GM10248 (cell line): ENCODE measurements at regions of chr4 and their contacts with region 1.

Region 1: GRCh38 chr4:2963175-2963965 is at the starts of genes GRK4 and NOP14:
- DNase-seq: peak; percentile 98
- CTCF ChIP-seq: peak; percentile 12

Region 2: GRCh38 chr4:2948895-2949765 is 14.2 kb before region 1 on chr4:
- CTCF ChIA-PET with region 1: interaction called, 23 read pairs
- POLR2A ChIA-PET with region 1: interaction called, 6 read pairs
- DNase-seq: no peak
- CTCF ChIP-seq: peak; percentile 42

Region 3: GRCh38 chr4:2991243-2991642 is 27.9 kb after region 1 on chr4:
- CTCF ChIA-PET with region 1: no interaction called
- POLR2A ChIA-PET with region 1: no interaction called
- DNase-seq: no peak
- CTCF ChIP-seq: no peak

Region 4: DNA sequence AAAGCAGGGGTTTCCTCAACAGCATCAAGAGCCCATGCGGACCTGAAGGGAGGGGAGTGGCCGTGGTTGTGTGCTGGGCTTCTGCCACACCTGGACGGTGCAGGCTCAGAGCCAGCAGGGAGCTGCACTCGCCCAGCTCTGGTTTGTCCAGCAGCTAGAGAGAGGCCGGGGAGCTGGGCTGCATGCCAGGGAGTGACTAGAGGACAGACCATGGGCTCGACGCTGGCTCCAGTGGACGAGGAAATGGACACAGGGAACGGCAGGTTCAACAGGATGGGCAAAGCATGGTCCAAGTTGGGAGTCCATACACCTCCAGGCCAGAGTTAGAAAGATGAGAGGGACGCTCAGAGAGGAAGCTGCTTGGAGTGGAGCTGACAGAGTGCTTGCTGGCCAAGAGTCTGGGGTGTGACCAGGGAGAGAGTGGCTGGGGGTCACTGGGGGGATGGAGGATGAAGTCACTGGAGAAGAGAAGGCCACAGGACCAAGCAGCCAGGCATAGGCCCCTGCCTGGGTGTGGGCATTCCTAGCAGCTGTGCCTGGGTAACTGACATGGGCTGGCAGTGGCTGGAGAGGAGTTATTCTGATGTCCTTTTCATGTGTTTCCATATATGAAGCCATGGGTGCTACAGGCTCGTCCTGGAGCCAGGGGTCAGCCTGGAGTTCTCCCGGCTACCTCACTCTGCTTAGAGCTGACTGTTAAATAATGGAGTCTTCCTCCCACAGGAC is 68.2 kb after region 1 on chr4:
- CTCF ChIA-PET with region 1: interaction called, 12 read pairs
- POLR2A ChIA-PET with region 1: no interaction called
- DNase-seq: no peak
- CTCF ChIP-seq: no peak